ENCODE measurements at regions of chr7 and their contacts with region 1.

Region 1: GRCh38 chr7:139431010-139431409 is 52.5 kb downstream of the KLRG2 start:
- DNase-seq: no peak
- ATAC-seq: no peak
- H3K4me3 Mint-ChIP-seq: no peak overlapping the region
- H3K27ac Mint-ChIP-seq: no peak overlapping the region
- H3K4me1 Mint-ChIP-seq: peaks cover 5% of the 10 kb centered on the region
- H3K27me3 Mint-ChIP-seq: no peaks in the 10 kb centered on the region
- CTCF ChIP-seq: no peak

Region 2: DNA sequence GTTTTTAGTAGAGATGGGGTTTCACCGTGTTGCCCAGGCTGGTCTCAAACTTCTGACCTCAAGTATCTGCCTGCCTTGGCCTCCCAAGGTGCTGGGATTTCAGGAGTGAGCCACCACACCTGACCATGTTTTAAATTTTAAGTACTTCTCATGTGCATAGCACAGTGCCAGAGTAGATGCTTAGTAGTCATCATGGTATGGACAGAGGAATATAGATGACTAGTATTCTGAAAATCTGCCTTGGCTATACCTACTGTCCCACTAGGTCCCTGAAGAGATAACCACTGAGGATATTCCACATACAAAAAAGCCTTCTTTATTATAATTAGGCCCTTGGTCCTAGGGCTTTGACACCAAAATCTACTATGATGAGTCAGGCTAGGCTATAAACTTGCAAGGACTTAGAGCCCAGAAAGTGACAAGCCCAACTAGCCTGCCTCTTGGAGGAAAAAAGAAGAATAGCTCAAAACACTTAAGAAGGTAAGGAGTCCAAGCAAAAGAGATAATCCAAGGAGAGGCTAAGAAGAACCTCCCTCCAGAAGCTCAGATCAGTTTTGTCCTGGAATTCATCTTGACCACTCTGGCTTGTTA is 37.3 kb before region 1 on chr7:
- CTCF ChIA-PET with region 1: interaction called, 16 read pairs
- POLR2A ChIA-PET with region 1: no interaction called
- intact Hi-C with region 1: no loop called
- DNase-seq: no peak
- ATAC-seq: no peak
- H3K4me3 Mint-ChIP-seq: no peak overlapping the region
- H3K27ac Mint-ChIP-seq: peak overlapping the region; percentile 27
- H3K4me1 Mint-ChIP-seq: peaks cover 35% of the 10 kb centered on the region
- H3K27me3 Mint-ChIP-seq: no peaks in the 10 kb centered on the region
- CTCF ChIP-seq: no peak

Region 3: DNA sequence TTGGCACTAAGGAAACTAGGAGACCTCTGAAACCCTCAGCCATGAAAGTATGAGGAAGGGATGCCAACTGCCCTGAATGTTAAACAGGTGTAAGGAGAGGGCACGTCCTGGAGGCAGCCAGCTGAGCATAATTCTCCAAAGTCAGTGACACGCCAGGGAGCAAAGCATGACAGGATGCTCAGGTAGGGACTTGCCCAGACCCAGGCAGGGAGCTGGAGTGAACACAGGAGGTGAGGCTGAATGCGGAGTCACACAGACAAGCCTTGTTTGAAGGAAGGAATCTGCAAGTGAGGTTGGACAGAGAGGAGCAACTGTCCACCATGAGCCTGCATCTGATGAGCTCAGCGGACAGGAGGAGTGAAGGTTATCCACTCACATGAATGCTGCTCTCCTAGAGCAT is 11.0 kb after region 1 on chr7:
- CTCF ChIA-PET with region 1: interaction called, 46 read pairs
- POLR2A ChIA-PET with region 1: no interaction called
- intact Hi-C with region 1: no loop called
- DNase-seq: no peak
- ATAC-seq: no peak
- H3K4me3 Mint-ChIP-seq: no peak overlapping the region
- H3K27ac Mint-ChIP-seq: no peak overlapping the region
- H3K4me1 Mint-ChIP-seq: no peaks in the 10 kb centered on the region
- H3K27me3 Mint-ChIP-seq: no peaks in the 10 kb centered on the region
- CTCF ChIP-seq: no peak

Region 4: DNA sequence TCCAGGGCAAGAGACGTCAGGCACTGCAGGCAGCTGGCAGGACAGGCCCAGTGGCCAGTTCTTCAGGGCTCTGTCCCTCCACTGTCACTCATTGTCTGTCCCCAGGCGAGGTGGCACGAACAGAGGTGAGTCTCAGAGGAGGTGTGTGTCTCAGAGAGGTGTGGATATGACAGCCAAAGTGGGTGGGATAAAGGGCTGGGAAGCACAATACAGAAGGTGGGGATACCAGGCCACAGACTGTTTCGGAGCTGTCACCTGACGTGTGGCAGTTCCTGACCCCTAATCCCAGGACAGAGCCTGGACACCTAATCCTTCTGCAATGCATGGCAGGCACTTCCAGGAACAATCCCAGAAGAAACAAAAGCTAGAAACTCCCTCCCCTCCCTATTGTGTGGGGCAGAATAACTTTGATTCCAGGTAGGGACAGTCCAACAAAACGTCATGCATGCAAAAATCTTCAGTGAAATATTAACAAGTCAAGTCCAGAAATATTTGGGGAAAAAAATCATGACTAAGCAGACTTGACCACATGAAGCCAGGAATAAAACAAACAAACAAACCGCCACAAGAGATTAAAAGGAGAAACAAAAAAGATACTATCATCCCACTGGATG is 40.8 kb after region 1 on chr7:
- CTCF ChIA-PET with region 1: interaction called, 10 read pairs
- POLR2A ChIA-PET with region 1: interaction called, 3 read pairs
- intact Hi-C with region 1: no loop called
- DNase-seq: no peak
- ATAC-seq: no peak
- H3K4me3 Mint-ChIP-seq: no peak overlapping the region
- H3K27ac Mint-ChIP-seq: no peak overlapping the region
- H3K4me1 Mint-ChIP-seq: no peaks in the 10 kb centered on the region
- H3K27me3 Mint-ChIP-seq: no peaks in the 10 kb centered on the region
- CTCF ChIP-seq: no peak

Region 5: GRCh38 chr7:139620676-139621344 is 189.8 kb after region 1 on chr7:
- CTCF ChIA-PET with region 1: interaction called, 10 read pairs
- POLR2A ChIA-PET with region 1: no interaction called
- intact Hi-C with region 1: no loop called
- DNase-seq: peak; percentile 72
- ATAC-seq: peak; percentile 90
- H3K4me3 Mint-ChIP-seq: no peak overlapping the region
- H3K27ac Mint-ChIP-seq: no peak overlapping the region
- H3K4me1 Mint-ChIP-seq: peaks cover 17% of the 10 kb centered on the region
- H3K27me3 Mint-ChIP-seq: no peaks in the 10 kb centered on the region
- CTCF ChIP-seq: peak; percentile 77

Measured in activated CD8-positive, alpha-beta T cell treated with anti-CD3 and anti-CD28 coated beads for 36 hours (primary cell).